Tibial artery (tissue), 4 donors: ENCODE measurements at regions of chr6 and their contacts with region 1.

Region 1: DNA sequence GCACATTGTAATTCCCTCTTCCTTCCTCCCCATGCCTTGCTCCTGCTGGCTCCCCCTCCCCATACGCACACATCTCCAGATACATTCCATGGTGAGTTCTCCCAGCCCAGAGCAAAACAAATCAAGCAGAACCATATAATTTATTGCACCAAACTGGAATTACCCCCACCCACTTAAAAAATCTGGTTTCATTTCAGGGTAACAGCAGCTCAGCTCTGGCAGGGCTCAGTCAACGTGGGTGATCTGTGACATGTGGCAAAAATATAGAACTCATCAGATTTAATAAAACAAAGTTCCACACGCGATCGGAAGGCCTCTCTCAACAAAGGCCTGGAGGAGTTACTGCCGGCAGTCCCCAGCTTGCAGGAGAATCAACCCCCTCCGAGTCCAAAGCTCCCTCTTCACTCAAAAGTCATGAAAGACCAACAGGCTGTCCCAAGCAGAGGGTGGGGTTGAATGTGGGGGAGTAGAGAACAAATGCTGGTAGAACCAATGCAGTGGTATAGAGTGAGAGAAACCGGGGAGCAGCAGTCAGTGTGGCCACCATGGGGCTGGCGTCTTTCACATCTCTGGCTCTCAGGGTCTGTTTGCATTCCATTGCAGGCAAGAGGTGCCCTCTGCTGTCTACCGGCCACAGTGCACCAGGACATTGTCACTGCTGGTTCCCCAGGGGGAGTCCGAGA is 323.3 kb upstream of the NT5E start:
- DNase-seq: peak; percentile 57 to 81
- H3K4me3 ChIP-seq: peak overlapping the region; percentile 21 to 28
- H3K27ac ChIP-seq: peak overlapping the region in 1 of 2 donors; percentile 19
- H3K4me1 ChIP-seq: peaks cover 0 to 18% (median 4%) of the 10 kb centered on the region in 4 donors
- H3K27me3 ChIP-seq: no peaks in the 10 kb centered on the region
- CTCF ChIP-seq: peak; percentile 71 to 75

Region 2: GRCh38 chr6:84408028-84408427 is 718.6 kb before region 1 on chr6:
- intact Hi-C with region 1: loop called (anchors 10 kb)
- DNase-seq: no peak
- H3K4me3 ChIP-seq: no peak overlapping the region
- H3K27ac ChIP-seq: no peak overlapping the region
- H3K4me1 ChIP-seq: peaks cover 0 to 29% (median 6%) of the 10 kb centered on the region in 4 donors
- H3K27me3 ChIP-seq: no peaks in the 10 kb centered on the region
- CTCF ChIP-seq: no peak

Region 3: DNA sequence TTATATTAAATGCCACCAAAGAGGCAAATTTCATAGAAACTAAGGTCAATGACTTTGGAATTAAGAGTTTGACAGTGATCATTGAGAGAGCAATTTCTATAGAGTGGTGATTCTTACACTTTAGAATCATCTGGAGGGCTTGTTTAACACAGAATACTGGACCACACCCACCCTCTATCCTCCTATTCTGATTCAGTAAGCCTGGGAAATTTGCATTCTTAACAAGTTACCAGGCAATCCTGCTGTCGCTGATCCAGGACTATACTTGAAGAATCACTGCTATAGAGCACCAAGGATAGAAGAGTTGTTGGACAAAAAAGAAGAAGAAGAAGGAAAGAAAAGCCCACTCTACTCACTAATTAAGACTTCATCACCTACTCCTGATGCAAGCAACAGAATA is 341.0 kb before region 1 on chr6:
- intact Hi-C with region 1: loop called (anchors 10 kb)
- DNase-seq: no peak
- H3K4me3 ChIP-seq: no peak overlapping the region
- H3K27ac ChIP-seq: no peak overlapping the region
- H3K4me1 ChIP-seq: peaks cover 0 to 8% (median 0%) of the 10 kb centered on the region in 4 donors
- H3K27me3 ChIP-seq: no peaks in the 10 kb centered on the region
- CTCF ChIP-seq: no peak

Region 4: GRCh38 chr6:85323435-85324040 is 196.9 kb after region 1 on chr6:
- intact Hi-C with region 1: loop called (anchors 5 kb)
- DNase-seq: peak; percentile 81 to 83
- H3K4me3 ChIP-seq: no peak overlapping the region
- H3K27ac ChIP-seq: peak overlapping the region in 1 of 2 donors; percentile 13
- H3K4me1 ChIP-seq: peaks cover 0 to 21% (median 0%) of the 10 kb centered on the region in 4 donors
- H3K27me3 ChIP-seq: no peaks in the 10 kb centered on the region
- CTCF ChIP-seq: peak; percentile 79 to 87